H1 (cell line): ENCODE measurements at regions of chr15 and their contacts with region 1.

Region 1: DNA sequence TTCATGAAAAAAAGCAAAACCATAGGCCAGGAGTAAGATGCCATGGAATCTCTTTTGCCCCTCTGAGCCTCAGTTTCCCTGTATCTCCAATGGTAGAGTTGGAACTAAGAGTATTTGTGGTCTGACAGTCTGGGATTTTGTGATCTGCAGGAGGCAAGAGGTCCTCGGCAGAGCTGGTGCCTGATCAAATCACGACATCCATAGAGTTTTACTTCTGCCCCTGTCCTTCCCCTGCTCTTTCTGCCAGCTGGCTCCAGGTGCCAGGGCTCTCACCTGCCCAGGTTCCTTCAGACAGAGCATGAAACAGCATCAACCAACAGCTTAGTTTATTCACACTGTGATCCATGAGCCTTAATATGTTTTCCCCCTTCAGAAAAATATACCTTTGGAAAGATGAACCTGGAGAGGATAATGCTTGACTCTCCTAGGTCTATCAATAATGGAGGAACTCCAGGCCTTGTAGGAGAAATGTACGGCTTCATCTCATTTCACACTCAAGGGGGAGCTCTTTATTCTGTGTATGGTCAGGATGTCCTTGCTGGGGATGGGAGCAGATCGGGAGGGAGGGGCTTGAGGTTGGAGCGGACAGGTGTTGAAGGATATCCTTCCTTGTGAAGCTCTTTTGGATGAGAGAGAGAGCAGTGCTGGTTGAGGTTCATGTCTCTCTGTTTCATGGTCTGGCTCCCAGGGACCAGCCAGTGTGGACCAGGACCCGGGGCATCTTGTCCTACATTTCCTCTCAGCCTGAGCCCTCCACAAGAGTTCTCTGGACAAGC is 309.9 kb downstream of the RPLP1 start:
- DNase-seq: no peak
- H3K4me3 ChIP-seq: no peak overlapping the region
- H3K27ac ChIP-seq: no peak overlapping the region
- H3K4me1 ChIP-seq: no peaks in the 10 kb centered on the region
- H3K27me3 ChIP-seq: no peaks in the 10 kb centered on the region
- CTCF ChIP-seq: peak; percentile 31 to 69 (median 62)
- EP300 ChIP-seq: no peak
- POLR2A ChIP-seq: no peak
- RAD21 ChIP-seq: peak; percentile 84 to 92

Region 2: GRCh38 chr15:69719527-69720240 is 42.9 kb before region 1 on chr15:
- CTCF ChIA-PET with region 1: interaction called, 11 read pairs
- POLR2A ChIA-PET with region 1: no interaction called
- DNase-seq: no peak
- H3K4me3 ChIP-seq: no peak overlapping the region
- H3K27ac ChIP-seq: no peak overlapping the region
- H3K4me1 ChIP-seq: peaks cover 0 to 3% (median 1%) of the 10 kb centered on the region in 4 experiments; a peak in 1 of 7 replicates
- H3K27me3 ChIP-seq: no peaks in the 10 kb centered on the region
- CTCF ChIP-seq: no peak
- EP300 ChIP-seq: no peak
- POLR2A ChIP-seq: no peak
- RAD21 ChIP-seq: no peak

Region 3: DNA sequence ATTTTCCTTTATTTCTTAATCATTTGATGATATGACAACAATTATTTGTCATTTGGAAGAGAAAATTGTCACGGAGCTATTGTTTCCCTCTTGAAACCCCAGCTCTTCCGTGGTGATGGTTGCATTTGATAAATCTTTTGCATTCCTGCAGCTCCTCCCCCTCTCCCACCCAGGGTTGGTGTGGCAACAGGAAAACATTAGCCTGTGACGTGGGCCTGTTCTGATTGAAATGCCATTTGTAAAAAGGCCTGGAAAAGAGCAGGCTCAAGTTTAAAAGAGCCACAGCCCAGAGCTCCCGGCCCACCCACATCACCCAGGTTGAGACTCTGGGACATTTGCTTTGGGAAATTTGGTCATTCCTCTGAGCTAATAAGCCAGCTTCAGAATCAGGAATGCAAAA is 27.4 kb before region 1 on chr15:
- CTCF ChIA-PET with region 1: interaction called, 10 read pairs
- POLR2A ChIA-PET with region 1: no interaction called
- DNase-seq: no peak
- H3K4me3 ChIP-seq: no peak overlapping the region
- H3K27ac ChIP-seq: no peak overlapping the region
- H3K4me1 ChIP-seq: peaks cover 0 to 4% (median under 1%) of the 10 kb centered on the region in 4 experiments; a peak in 3 of 7 replicates
- H3K27me3 ChIP-seq: no peaks in the 10 kb centered on the region
- CTCF ChIP-seq: no peak
- EP300 ChIP-seq: 0 out of 3 replicates have a peak, but pooled peaks of 1 of the 2 experiments have one; percentile 65
- POLR2A ChIP-seq: no peak
- RAD21 ChIP-seq: no peak

Region 4: GRCh38 chr15:69749797-69750196 is 12.8 kb before region 1 on chr15:
- CTCF ChIA-PET with region 1: interaction called, 11 read pairs
- POLR2A ChIA-PET with region 1: no interaction called
- DNase-seq: no peak
- H3K4me3 ChIP-seq: no peak overlapping the region
- H3K27ac ChIP-seq: no peak overlapping the region
- H3K4me1 ChIP-seq: peaks cover 0 to 3% (median 0%) of the 10 kb centered on the region in 4 experiments; a peak in 1 of 7 replicates
- H3K27me3 ChIP-seq: no peaks in the 10 kb centered on the region
- CTCF ChIP-seq: no peak
- EP300 ChIP-seq: no peak
- POLR2A ChIP-seq: no peak
- RAD21 ChIP-seq: peak in 1 of 2 experiments; percentile 23; a peak in 1 of 4 replicates